Testis (tissue), 5 donors: ENCODE measurements at regions of chr11 and their contacts with region 1.

Region 1: DNA sequence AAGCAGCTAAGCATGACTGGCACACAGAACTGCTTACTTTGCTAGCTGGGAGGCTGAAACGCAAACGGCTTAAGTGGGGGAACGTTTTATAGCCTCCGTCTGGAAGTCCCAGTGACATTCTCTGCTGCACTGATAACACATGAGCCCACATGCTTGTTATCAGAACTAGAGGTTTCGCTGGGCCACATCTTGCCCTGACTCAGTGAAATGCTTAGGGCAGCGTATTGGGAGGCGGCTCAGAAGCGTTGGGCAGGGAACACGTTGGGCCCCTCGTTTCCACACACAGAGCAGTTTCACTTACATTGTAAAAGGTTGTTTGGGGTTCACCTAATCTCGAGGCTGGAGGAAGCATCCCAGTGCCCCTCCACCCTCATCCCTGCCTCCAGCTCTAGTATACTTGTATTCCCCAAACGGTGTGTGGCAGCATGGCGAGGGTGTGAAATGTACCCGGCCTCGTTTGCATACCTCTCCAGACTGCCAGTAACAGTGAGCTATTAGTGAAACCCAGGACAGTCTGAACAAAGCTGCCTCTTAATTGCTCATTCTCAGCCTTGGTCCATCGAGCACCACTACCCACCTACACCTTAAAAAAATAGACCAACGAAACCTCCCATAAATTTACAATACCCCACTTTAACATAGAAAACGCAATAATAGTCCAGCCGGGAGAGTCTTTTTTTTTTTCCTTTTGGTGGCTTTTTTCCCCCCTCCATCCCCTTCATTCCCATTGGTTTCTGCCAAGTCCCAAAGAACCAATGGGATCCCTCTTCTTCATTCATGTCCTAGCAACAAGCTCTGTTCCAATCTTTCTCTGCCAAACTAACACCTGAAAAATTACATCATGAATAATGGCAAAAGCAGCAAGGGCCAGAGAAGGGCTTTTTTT is 218.8 kb upstream of the SORL1-AS1 start:
- DNase-seq: peak; percentile 58
- H3K4me3 ChIP-seq: no peak overlapping the region
- H3K27ac ChIP-seq: peak overlapping the region; percentile 69 to 82
- H3K4me1 ChIP-seq: peaks cover 32% of the 10 kb centered on the region
- H3K27me3 ChIP-seq: no peaks in the 10 kb centered on the region
- CTCF ChIP-seq: no peak
- POLR2A ChIP-seq: no peak

Region 2: DNA sequence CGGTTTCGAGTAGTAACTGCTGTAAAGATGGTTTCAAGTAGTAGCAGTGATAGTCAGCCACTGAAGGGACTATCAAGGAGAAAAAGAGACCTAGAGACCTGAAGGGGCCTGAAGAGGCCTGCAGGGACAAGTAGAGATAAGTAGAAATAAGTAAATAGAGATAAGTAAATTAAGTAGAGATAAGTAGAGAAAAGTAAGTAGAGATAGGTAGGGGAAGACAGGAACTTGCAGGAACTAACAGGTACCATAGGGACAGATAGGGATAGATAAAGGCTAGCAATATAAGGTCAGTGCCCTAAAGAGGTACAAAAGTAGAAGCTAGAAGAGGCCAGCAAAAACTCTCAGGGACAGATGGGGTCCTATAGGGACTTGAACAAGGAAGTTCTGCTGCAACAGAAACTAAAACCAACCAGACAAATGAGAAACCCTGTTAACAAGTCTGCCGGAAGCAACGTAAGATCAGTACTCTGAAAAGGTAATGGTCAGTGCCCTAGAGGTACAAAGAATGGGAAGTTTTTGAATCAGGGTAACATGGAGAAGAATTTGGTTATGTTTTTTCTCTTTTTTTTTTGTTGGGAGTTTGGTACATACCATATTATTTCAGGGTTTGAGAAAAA is 388.5 kb before region 1 on chr11:
- intact Hi-C with region 1: no loop called
- DNase-seq: no peak
- H3K4me3 ChIP-seq: no peak overlapping the region
- H3K27ac ChIP-seq: no peak overlapping the region
- H3K4me1 ChIP-seq: no peaks in the 10 kb centered on the region
- H3K27me3 ChIP-seq: no peaks in the 10 kb centered on the region
- CTCF ChIP-seq: no peak
- POLR2A ChIP-seq: no peak

Region 3: GRCh38 chr11:121722431-121723245 is 51.1 kb after region 1 on chr11:
- intact Hi-C with region 1: loop called (anchors 10 kb)
- DNase-seq: peak; percentile 95
- H3K4me3 ChIP-seq: peak overlapping the region; percentile 57 to 68
- H3K27ac ChIP-seq: peak overlapping the region; percentile 91 to 95
- H3K4me1 ChIP-seq: peaks cover 12% of the 10 kb centered on the region
- H3K27me3 ChIP-seq: no peaks in the 10 kb centered on the region
- CTCF ChIP-seq: peak in 1 of 3 experiments; percentile 19
- POLR2A ChIP-seq: peak; percentile 22

Region 4: GRCh38 chr11:122170815-122171475 is 499.4 kb after region 1 on chr11:
- intact Hi-C with region 1: no loop called
- DNase-seq: no peak
- H3K4me3 ChIP-seq: no peak overlapping the region
- H3K27ac ChIP-seq: no peak overlapping the region
- H3K4me1 ChIP-seq: no peaks in the 10 kb centered on the region
- H3K27me3 ChIP-seq: no peaks in the 10 kb centered on the region
- CTCF ChIP-seq: no peak
- POLR2A ChIP-seq: no peak